Breast epithelium (tissue), 4 donors: ENCODE measurements at regions of chr12 and their contacts with region 1.

Region 1: GRCh38 chr12:11877869-11878780 is 192.6 kb upstream of the BCL2L14 start:
- DNase-seq: peak in 1 of 2 donors; percentile 54
- H3K4me3 ChIP-seq: peak overlapping the region in 1 of 3 donors; percentile 13
- H3K27ac ChIP-seq: peak overlapping the region; percentile 54 to 86
- H3K4me1 ChIP-seq: peaks cover 7 to 14% of the 10 kb centered on the region in 2 donors
- H3K27me3 ChIP-seq: no peaks in the 10 kb centered on the region
- CTCF ChIP-seq: no peak
- POLR2A ChIP-seq: no peak

Region 2: DNA sequence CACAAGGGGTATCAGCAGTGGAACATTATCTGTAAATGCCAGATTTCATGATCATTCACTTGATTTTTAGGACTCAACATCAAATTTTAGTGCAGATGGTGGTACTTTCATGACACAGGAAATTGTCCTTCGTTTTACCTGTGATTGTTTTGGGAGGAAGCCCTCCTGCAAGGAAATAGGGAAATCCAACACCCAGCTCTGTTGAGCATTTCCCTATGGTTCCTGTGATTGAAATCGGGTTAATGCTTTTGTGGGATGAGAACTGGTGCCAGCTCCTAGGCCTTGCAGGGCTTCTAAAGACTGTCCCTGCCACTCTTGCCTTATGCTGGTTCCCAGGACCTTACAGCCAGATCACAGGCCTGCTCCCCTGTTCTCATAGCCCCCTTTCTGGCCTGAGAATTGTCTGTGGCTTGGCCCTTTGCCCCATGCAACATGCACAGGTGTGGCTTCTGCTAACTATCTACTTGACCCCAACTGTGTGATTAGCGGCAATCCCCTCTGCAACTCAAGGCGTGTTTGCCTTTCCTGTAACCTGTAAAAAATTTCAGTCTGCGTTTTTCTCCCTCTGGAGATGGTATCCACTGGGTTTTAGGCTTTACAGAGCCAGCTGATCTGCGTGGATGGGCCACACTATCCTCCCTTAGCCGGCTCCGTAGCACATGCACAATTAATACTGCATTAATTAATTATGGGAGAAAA is 116.1 kb before region 1 on chr12:
- intact Hi-C with region 1: loop called (anchors 5 kb)
- DNase-seq: no peak
- H3K4me3 ChIP-seq: no peak overlapping the region
- H3K27ac ChIP-seq: peak overlapping the region; percentile 27 to 78
- H3K4me1 ChIP-seq: peaks cover 0 to 22% of the 10 kb centered on the region in 2 donors
- H3K27me3 ChIP-seq: no peaks in the 10 kb centered on the region
- CTCF ChIP-seq: no peak
- POLR2A ChIP-seq: no peak

Region 3: DNA sequence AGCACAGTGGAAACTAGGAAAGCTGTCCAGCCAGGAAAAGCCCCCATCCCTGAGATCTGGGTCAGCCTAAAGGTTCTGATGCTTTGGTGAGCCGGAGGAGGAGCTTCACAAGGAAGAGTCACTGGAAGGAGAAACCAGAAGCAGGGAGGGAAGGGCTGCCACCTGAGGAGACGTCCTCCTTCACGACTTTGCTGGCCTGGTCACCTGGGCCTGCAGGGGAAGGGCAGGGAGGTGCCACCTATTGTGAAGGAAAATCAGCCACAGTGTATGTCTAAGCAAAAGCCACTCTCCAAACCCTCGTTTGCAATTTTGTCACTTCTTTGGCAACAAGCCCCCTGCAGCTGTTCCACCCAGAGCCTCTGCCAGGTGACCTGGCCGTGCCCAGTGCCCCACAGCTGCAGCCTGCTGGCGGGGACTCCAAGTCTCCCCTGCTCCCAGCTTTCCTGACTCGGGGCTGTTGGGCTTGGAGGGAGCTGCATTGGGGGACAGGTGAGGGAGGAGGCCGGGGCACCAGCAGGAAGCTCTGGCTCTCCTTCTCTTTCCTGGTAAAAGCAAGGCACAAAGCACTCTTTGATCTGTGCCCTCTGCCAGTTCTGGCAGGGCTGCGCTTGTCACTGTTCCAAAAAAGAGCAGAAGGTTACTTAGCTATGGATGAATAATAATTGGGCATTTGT is 71.8 kb after region 1 on chr12:
- intact Hi-C with region 1: no loop called
- DNase-seq: peak; percentile 57 to 74
- H3K4me3 ChIP-seq: no peak overlapping the region
- H3K27ac ChIP-seq: peak overlapping the region; percentile 41 to 65
- H3K4me1 ChIP-seq: peaks cover 0 to 14% of the 10 kb centered on the region in 2 donors
- H3K27me3 ChIP-seq: no peaks in the 10 kb centered on the region
- CTCF ChIP-seq: no peak
- POLR2A ChIP-seq: no peak

Region 4: DNA sequence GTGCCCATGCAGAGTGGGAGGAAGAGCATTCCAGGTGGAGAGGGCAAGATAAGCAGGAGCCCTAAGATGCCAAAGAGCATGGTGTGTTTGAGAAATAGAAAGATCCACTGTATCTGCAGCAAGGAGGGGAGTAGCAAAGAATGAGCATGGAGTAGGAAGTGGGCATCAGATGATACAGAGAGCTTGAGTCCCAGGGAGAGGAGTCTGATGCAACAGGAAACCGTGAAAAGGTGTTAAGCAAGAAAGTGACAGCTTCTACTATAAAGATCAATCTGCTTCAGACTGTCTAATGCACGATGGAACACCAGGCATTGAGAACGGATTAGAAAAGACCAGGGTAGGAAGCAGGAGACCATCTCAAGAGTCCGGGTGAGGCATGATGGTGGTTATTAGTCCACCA is 1086.1 kb after region 1 on chr12:
- intact Hi-C with region 1: no loop called
- DNase-seq: no peak
- H3K4me3 ChIP-seq: no peak overlapping the region
- H3K27ac ChIP-seq: no peak overlapping the region
- H3K4me1 ChIP-seq: no peaks in the 10 kb centered on the region
- H3K27me3 ChIP-seq: no peaks in the 10 kb centered on the region
- CTCF ChIP-seq: no peak
- POLR2A ChIP-seq: no peak